A673 (cell line): ENCODE measurements at regions of chr6 and their contacts with region 1.

Region 1: DNA sequence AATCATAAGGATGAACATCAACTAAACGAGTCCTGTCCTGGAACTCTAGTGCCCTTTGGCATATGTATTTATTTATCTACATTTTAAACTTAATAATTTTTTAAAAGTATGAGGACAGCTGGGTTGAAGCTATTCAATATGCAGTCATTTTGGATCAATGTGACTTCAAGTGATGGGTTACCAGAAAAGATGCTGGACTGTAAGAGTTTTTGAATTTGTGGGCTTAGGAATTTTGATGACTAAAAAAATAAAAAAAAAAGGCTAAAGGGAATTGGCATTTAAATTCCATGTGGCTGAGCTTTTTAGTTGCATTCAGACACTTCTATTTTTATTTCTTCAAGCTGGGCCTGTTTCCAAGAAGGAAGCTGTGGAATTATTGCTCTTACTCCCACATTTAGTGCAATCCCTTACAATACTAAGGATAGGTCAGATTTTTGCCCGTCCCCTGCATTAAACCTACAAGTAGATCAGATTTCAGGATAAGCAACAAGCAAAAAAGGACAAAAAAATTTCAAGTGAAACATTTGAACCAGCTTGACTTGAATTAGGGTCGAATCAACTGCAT is 704.2 kb upstream of the CITED2 start:
- DNase-seq: peak; percentile 90
- H3K4me3 ChIP-seq: no peak overlapping the region
- H3K27ac ChIP-seq: peak overlapping the region; percentile 82
- H3K4me1 ChIP-seq: peaks cover 60% of the 10 kb centered on the region
- H3K27me3 ChIP-seq: no peaks in the 10 kb centered on the region
- CTCF ChIP-seq: no peak

Region 2: DNA sequence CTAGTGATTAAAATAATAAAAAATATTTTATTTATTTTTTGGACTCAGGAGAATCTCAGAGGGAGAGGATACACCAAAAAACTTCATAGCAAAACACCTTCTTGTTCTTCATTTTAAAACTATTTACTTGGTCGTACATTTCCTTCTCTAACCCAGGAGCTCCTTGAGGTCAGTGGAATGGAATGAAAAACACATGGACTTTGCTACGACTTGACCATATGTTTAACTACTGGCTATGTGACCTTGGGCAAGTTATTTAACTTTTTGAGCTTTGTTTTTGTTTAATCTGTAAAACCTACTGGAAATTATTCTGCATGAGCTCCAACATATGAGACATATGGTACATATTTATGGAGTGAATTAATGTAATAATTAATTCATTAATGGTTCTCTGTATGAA is 301.3 kb after region 1 on chr6:
- CTCF ChIA-PET with region 1: no interaction called
- POLR2A ChIA-PET with region 1: no interaction called
- intact Hi-C with region 1: loop called (anchors 10 kb)
- DNase-seq: no peak
- H3K4me3 ChIP-seq: no peak overlapping the region
- H3K27ac ChIP-seq: no peak overlapping the region
- H3K4me1 ChIP-seq: no peaks in the 10 kb centered on the region
- H3K27me3 ChIP-seq: no peaks in the 10 kb centered on the region
- CTCF ChIP-seq: no peak